Activated CD4-positive, alpha-beta T cell treated with anti-CD3 and anti-CD28 coated beads for 36 hours (primary cell): ENCODE measurements at regions of chr15 and their contacts with region 1.

Region 1: GRCh38 chr15:64093627-64094417 is at the start of gene CIAO2A:
- DNase-seq: peak; percentile 97
- ATAC-seq: peak; percentile 87
- H3K4me3 Mint-ChIP-seq: peak within 1 kb of the TSS; percentile 91
- H3K27ac Mint-ChIP-seq: peak within 1 kb of the TSS; percentile 96
- H3K4me1 Mint-ChIP-seq: peaks cover 49% of the 10 kb centered on the region
- H3K27me3 Mint-ChIP-seq: no peaks in the 10 kb centered on the region
- total RNA-seq, gene CIAO2A: 95.5 to 111 TPM

Region 2: GRCh38 chr15:63188926-63189871 is 904.6 kb before region 1 on chr15 and contains the start of gene RAB8B:
- CTCF ChIA-PET with region 1: no interaction called
- POLR2A ChIA-PET with region 1: no interaction called
- intact Hi-C with region 1: loop called (anchors 2 to 10 kb)
- DNase-seq: peak; percentile 100
- ATAC-seq: peak; percentile 76
- H3K4me3 Mint-ChIP-seq: peak within 1 kb of the TSS; percentile 99
- H3K27ac Mint-ChIP-seq: peak within 1 kb of the TSS; percentile 97
- H3K4me1 Mint-ChIP-seq: peaks cover 39% of the 10 kb centered on the region
- H3K27me3 Mint-ChIP-seq: no peaks in the 10 kb centered on the region
- total RNA-seq, gene RAB8B: 147 to 260 TPM

Region 3: DNA sequence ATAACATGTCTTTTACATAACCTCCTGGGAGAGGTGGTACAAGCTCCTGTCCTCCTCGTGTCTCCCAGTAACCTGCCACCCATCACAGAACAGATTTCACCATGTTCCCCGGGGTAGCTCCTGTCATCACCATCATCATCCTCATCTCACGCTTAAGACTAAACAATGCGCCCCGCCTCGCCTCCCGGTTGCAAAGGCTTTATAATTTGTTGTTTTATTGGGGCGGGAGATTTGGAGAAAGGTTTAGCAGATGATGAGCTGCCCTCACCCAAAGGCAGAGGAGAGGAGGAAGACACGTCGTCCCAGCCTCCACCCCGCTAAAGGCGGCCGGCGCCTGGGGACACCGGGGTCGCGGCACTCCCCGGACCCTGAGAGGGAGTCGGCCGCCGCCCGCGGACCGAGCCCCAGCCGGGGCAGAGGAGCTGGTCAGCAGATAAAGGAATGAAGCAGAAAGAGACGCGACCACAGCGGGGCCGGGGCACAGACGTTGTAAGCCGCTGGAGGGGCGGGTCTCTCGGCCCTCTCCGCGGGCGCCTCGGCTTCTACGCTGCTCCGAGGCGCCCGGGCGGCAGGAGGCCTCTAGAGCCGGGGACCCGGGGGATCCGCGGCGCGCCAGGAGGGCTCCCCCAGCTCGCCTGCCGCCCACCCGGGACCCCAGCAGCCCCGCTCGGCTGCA is 260.7 kb before region 1 on chr15:
- CTCF ChIA-PET with region 1: interaction called, 5 read pairs
- POLR2A ChIA-PET with region 1: interaction called, 3 read pairs
- intact Hi-C with region 1: loop called (anchors 1 to 5 kb)
- DNase-seq: peak; percentile 64
- ATAC-seq: peak; percentile 50
- H3K4me3 Mint-ChIP-seq: peak overlapping the region; percentile 87
- H3K27ac Mint-ChIP-seq: peak overlapping the region; percentile 91
- H3K4me1 Mint-ChIP-seq: peaks cover 50% of the 10 kb centered on the region
- H3K27me3 Mint-ChIP-seq: no peaks in the 10 kb centered on the region

Region 4: GRCh38 chr15:64153480-64154367 is 59.9 kb after region 1 on chr15:
- CTCF ChIA-PET with region 1: interaction called, 7 read pairs
- POLR2A ChIA-PET with region 1: interaction called, 3 read pairs
- intact Hi-C with region 1: loop called (anchors 1 to 2 kb)
- DNase-seq: peak; percentile 96
- ATAC-seq: peak; percentile 91
- H3K4me3 Mint-ChIP-seq: no peak overlapping the region
- H3K27ac Mint-ChIP-seq: no peak overlapping the region
- H3K4me1 Mint-ChIP-seq: peaks cover 23% of the 10 kb centered on the region
- H3K27me3 Mint-ChIP-seq: peaks cover 13% of the 10 kb centered on the region

Region 5: DNA sequence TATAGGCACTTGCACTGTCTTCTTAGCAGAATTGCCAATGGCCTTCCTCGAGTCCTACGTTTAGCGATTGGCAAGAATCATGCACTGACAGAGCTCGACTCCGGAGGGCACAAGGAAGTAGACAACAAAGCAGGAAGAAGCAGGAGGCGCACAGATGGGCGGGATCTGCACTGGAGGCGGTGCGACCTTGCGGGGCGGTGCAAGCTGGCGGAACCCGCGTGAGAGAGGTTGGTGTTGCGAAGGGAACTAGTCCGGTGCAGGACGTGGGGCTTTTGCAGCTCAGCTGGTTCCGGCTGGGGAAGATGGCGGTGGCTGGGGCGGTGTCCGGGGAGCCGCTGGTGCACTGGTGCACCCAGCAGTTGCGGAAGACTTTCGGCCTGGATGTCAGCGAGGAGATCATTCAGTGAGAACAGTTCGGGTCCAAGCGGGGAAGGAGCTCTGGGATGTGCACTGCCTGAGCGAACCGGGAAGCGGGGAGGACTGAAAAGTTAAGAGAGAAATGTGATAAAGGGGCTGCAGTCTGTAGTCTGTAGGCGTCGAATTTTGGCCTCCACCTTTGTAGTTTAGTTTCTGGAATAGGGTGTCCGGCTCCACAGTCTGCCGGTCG is 293.8 kb after region 1 on chr15 and contains the start of gene TRIP4:
- CTCF ChIA-PET with region 1: no interaction called
- POLR2A ChIA-PET with region 1: no interaction called
- intact Hi-C with region 1: loop called (anchors 2 to 10 kb)
- DNase-seq: peak; percentile 98
- ATAC-seq: peak; percentile 100
- H3K4me3 Mint-ChIP-seq: peak within 1 kb of the TSS; percentile 85
- H3K27ac Mint-ChIP-seq: peak within 1 kb of the TSS; percentile 91
- H3K4me1 Mint-ChIP-seq: peaks cover 17% of the 10 kb centered on the region
- H3K27me3 Mint-ChIP-seq: no peaks in the 10 kb centered on the region
- total RNA-seq, gene TRIP4: 13.1 to 19.6 TPM

Region 6: GRCh38 chr15:64841258-64842095 is 747.7 kb after region 1 on chr15 and contains the start of gene PLEKHO2:
- CTCF ChIA-PET with region 1: no interaction called
- POLR2A ChIA-PET with region 1: no interaction called
- intact Hi-C with region 1: loop called in 1 of 2 experiments (anchors 5 kb)
- DNase-seq: peak; percentile 94
- ATAC-seq: peak; percentile 73
- H3K4me3 Mint-ChIP-seq: peak within 1 kb of the TSS; percentile 88
- H3K27ac Mint-ChIP-seq: peak within 1 kb of the TSS; percentile 84
- H3K4me1 Mint-ChIP-seq: peaks cover 66% of the 10 kb centered on the region
- H3K27me3 Mint-ChIP-seq: no peaks in the 10 kb centered on the region
- total RNA-seq, gene PLEKHO2: 11.4 to 13.3 TPM